ENCODE measurements at regions of chr4 and their contacts with region 1.

Region 1: GRCh38 chr4:75673027-75673958 is at the start of gene G3BP2:
- DNase-seq: peak; percentile 98
- ATAC-seq: peak; percentile 96
- H3K4me3 ChIP-seq: peak within 1 kb of the TSS; percentile 71 to 94
- H3K27ac ChIP-seq: peak within 1 kb of the TSS; percentile 86
- H3K4me1 ChIP-seq: peaks cover 6 to 23% of the 10 kb centered on the region in 2 experiments; a peak in 3 of 4 replicates
- H3K27me3 ChIP-seq: no peaks in the 10 kb centered on the region
- CTCF ChIP-seq: no peak
- POLR2A ChIP-seq: peak; percentile 87
- RAD21 ChIP-seq: no peak
- total RNA-seq, gene G3BP2: 153 TPM

Region 2: DNA sequence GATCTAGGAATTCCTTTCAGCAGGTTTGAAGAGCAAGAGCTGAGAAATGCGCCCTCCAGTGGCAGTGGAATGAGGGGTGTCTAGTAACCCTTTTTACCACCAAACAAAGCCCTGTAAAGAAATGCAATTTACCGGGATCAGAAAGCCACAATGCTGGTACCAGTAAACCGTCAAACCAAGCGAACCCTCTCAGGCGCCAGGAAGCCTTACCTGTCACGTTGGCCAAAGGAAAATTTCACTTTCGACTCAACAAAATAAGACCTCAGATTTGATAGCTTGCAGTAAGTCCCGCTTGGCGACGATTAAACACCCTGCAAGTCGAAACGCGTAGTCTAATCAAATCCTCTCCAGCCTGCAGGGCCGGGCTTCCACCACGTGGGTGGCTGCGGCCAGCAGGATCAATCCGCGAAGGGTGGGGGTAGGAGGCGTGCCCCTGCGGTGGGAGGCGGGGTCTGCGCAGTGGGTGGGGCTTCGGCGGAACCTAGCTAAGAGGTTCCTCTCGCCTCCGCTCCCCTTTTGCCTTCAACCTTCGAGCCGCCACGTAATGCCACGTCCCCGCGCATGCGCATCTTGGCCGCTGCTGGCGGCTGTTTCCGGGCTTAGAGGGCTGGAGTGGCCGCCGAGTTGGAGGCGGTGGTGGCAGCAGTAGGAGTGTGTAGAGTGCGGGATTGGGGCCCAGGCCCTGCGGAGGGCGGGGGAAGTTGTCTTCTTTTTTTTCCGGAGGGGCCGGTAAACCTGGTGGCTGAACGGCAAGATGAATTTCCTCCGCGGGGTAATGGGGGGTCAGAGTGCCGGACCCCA is 51.0 kb after region 1 on chr4 and contains the start of gene USO1:
- CTCF ChIA-PET with region 1: no interaction called
- POLR2A ChIA-PET with region 1: interaction called, 12 read pairs
- RAD21 ChIA-PET with region 1: no interaction called
- intact Hi-C with region 1: loop called (anchors 1 kb)
- DNase-seq: peak; percentile 97
- ATAC-seq: peak; percentile 92
- H3K4me3 ChIP-seq: peak within 1 kb of the TSS; percentile 89 to 99
- H3K27ac ChIP-seq: peak within 1 kb of the TSS; percentile 80
- H3K4me1 ChIP-seq: peaks cover 7 to 18% of the 10 kb centered on the region in 2 experiments
- H3K27me3 ChIP-seq: no peaks in the 10 kb centered on the region
- CTCF ChIP-seq: peak; percentile 80 to 86 (median 84); a peak in 5 of 6 replicates
- POLR2A ChIP-seq: peak; percentile 88
- RAD21 ChIP-seq: peak; percentile 69
- total RNA-seq, gene USO1: 72.7 TPM